PC-3 (cell line): ENCODE measurements at regions of chr7 and their contacts with region 1.

Region 1: DNA sequence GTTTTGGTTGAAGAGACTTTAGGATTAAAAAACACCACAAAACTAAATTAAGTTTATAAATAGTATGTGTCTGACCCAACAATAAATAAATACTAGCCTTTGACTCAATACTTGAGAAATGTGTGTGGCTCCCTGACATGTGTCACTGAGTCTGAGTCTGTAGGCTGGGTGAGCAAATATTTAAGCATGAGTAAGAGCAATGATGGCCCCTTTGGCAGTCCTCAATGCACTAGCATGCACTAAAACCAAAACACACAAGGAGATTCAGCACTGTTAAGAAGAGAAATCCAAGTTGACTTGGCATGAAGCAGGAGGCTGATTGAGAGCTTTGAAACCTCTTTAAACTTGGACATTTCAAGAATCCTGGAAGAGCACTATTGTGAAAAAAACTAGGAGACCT is 37.1 kb downstream of the CCDC71L start:
- DNase-seq: peak; percentile 93
- ATAC-seq: peak; percentile 93
- H3K4me3 ChIP-seq: no peak overlapping the region
- H3K27ac ChIP-seq: peak overlapping the region; percentile 75
- H3K4me1 ChIP-seq: peaks cover 66% of the 10 kb centered on the region
- H3K27me3 ChIP-seq: no peaks in the 10 kb centered on the region
- CTCF ChIP-seq: no peak

Region 2: GRCh38 chr7:105830391-105831301 is 793.2 kb before region 1 on chr7:
- CTCF ChIA-PET with region 1: no interaction called
- POLR2A ChIA-PET with region 1: no interaction called
- intact Hi-C with region 1: loop called (anchors 5 kb)
- DNase-seq: peak; percentile 99
- ATAC-seq: peak; percentile 82
- H3K4me3 ChIP-seq: no peak overlapping the region
- H3K27ac ChIP-seq: peak overlapping the region; percentile 82
- H3K4me1 ChIP-seq: peaks cover 57% of the 10 kb centered on the region
- H3K27me3 ChIP-seq: no peaks in the 10 kb centered on the region
- CTCF ChIP-seq: no peak

Region 3: GRCh38 chr7:106568680-106569499 is 55.0 kb before region 1 on chr7:
- CTCF ChIA-PET with region 1: no interaction called
- POLR2A ChIA-PET with region 1: no interaction called
- intact Hi-C with region 1: loop called (anchors 1 kb)
- DNase-seq: peak; percentile 41
- ATAC-seq: peak; percentile 41
- H3K4me3 ChIP-seq: no peak overlapping the region
- H3K27ac ChIP-seq: no peak overlapping the region; the same call in 1 of the 2 replicates
- H3K4me1 ChIP-seq: peaks cover 11% of the 10 kb centered on the region
- H3K27me3 ChIP-seq: no peaks in the 10 kb centered on the region
- CTCF ChIP-seq: no peak

Region 4: DNA sequence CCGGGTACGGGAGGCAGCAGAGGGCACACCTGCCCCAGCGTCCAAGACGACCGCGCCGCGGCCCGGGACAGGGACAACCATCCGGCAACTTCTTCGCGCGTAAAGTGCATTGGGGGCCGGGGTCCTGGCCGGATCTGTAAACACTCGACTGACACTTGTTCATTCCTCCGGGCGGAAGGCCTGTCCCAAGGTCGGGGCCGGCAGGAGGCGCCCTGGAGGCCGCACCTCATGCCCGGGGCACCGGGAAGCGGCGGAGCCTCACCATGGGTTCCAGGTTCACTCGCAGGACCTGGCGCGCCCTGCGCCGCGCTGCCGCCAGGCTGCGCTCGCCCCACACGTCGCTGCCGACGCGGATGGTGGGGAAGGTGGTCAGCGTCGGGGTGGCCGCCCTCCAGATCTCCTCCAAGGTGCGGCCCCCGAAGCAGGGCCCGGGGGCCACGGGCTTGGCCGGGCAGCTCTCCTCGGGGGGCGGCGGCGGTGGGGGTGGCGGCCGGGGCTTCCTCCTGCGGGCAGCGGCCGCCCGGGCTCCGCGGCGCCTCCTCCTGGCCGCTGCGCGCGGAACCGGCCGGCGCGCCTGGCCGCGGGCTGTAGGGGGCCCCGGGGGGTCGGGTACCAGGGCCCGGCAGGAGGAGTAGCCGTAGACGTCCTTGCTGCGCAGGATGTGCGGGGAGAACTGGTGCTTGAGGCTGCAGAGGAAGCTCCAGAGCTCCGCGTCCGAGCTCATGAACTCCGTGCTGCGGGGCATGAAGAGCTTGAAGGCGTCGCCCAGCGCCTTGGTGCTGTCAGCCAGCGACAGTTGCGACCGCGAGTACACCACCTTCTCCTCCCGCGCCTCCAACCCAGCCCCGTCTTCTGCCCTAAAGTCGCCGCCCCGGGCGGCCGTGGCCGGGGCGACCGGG is 36.4 kb after region 1 on chr7:
- CTCF ChIA-PET with region 1: interaction called, 3 read pairs
- POLR2A ChIA-PET with region 1: interaction called, 3 read pairs
- intact Hi-C with region 1: loop called (anchors 2 kb)
- DNase-seq: peak; percentile 79
- ATAC-seq: peak; percentile 66
- H3K4me3 ChIP-seq: peak overlapping the region; percentile 88
- H3K27ac ChIP-seq: peak overlapping the region; percentile 38
- H3K4me1 ChIP-seq: peaks cover 8% of the 10 kb centered on the region; the same call in 1 of the 2 replicates
- H3K27me3 ChIP-seq: no peaks in the 10 kb centered on the region
- CTCF ChIP-seq: peak; percentile 80

Region 5: DNA sequence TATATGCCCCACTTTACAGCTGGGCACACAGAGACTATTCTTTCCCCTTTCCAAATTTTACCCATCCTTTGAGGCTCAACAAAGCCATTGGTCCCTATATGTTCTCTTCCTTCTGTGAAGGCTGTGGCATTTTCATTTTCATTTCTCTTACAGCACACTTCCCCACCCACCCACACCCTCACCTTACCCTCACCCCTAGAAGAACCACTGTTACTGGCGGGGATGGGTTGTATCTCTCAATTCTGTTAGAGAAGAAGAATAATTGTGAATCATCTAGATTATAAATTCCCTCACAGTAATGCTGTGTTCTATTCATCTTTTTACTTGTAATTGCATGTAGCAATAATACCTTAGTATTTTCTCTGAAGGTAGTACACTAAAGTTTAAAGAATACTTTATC is 47.3 kb after region 1 on chr7:
- CTCF ChIA-PET with region 1: no interaction called
- POLR2A ChIA-PET with region 1: no interaction called
- intact Hi-C with region 1: no loop called
- DNase-seq: no peak
- ATAC-seq: no peak
- H3K4me3 ChIP-seq: no peak overlapping the region
- H3K27ac ChIP-seq: no peak overlapping the region
- H3K4me1 ChIP-seq: peaks cover 18% of the 10 kb centered on the region
- H3K27me3 ChIP-seq: no peaks in the 10 kb centered on the region
- CTCF ChIP-seq: no peak

Region 6: GRCh38 chr7:106779877-106780276 is 156.0 kb after region 1 on chr7:
- CTCF ChIA-PET with region 1: no interaction called
- POLR2A ChIA-PET with region 1: no interaction called
- intact Hi-C with region 1: loop called (anchors 5 kb)
- DNase-seq: peak; percentile 40
- ATAC-seq: no peak
- H3K4me3 ChIP-seq: no peak overlapping the region
- H3K27ac ChIP-seq: no peak overlapping the region
- H3K4me1 ChIP-seq: peaks cover 28% of the 10 kb centered on the region
- H3K27me3 ChIP-seq: no peaks in the 10 kb centered on the region
- CTCF ChIP-seq: peak; percentile 39